Mucosa of descending colon (tissue), 3 donors: ENCODE measurements at regions of chr1 and their contacts with region 1.

Region 1: GRCh38 chr1:201703621-201704439 is 125.1 kb upstream of the IPO9 start:
- DNase-seq: peak; percentile 85 to 88 (median 85)
- ATAC-seq: peak; percentile 97
- H3K4me3 ChIP-seq: no peak overlapping the region
- H3K4me1 ChIP-seq: peaks cover 12% of the 10 kb centered on the region
- CTCF ChIP-seq: peak; percentile 95

Region 2: DNA sequence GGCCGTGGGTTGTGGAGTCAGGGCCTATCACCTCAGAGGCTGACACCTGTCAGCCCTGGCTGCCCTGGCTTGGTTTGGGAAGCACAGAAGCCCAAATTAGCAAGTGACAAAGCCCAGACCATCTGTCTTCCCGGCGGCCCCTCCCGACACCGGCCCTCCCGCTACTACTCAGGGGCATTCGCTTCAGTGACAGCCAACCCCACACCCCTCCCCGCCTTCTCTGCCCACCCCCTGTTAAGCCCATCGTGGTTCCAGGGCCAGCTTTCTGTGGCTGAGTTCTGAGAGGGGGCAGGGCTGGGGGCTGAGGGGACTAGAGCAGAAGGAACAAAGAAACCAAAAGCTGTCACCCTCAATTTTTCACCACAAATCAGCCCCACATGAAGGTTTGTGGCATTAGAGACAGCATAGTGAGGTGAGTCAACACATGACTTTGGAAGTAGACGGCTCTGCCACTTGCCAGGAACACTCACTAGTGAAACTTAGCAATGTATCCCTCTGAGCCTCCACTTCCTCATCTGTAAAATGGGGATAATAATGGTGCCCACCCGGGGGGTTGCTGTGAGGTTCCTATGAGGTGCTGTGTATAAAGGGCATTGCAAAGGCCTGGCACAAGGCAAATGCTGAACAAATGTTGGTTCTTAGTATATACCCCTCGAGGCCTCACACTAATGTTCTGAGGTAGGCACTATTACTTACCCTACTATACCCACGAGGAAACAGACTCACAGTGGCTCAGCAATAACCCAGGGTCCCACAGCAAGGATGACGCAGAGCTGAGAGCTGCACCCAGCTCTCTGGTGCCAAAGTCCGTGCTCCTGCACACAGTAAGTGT is 277.1 kb before region 1 on chr1:
- intact Hi-C with region 1: no loop called
- DNase-seq: no peak
- ATAC-seq: no peak
- H3K4me3 ChIP-seq: no peak overlapping the region
- H3K4me1 ChIP-seq: no peaks in the 10 kb centered on the region
- CTCF ChIP-seq: no peak

Region 3: DNA sequence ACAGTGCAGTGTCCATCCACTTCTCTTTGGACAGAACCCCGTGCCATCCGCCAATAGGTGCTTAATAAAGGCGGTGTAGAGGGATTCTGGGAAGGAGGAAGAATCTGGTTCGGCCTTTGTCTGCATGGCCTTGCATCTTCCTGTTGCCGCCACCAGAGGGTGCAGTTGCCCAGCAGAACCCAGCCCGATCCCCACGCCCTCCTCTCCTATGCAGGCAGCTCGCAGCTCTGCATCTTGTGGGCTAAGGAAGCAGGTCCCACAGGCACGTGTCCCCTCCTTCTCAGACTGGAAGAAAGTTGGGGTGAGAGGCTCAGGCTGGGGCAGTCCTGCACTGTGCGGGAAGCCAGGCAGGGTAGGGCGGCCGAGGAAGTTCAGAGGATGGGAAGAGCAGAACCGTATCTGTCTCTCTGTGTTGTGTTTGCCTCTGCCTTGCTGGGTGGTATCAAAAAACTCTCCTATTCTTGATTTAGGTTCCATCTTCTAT is 144.1 kb before region 1 on chr1:
- intact Hi-C with region 1: loop called (anchors 2 to 5 kb)
- DNase-seq: peak; percentile 78 to 84 (median 82)
- ATAC-seq: peak; percentile 96
- H3K4me3 ChIP-seq: no peak overlapping the region
- H3K4me1 ChIP-seq: peaks cover 4% of the 10 kb centered on the region
- CTCF ChIP-seq: peak; percentile 79